Left colon (tissue), 2 donors: ENCODE measurements at regions of chr1 and their contacts with region 1.

Region 1: DNA sequence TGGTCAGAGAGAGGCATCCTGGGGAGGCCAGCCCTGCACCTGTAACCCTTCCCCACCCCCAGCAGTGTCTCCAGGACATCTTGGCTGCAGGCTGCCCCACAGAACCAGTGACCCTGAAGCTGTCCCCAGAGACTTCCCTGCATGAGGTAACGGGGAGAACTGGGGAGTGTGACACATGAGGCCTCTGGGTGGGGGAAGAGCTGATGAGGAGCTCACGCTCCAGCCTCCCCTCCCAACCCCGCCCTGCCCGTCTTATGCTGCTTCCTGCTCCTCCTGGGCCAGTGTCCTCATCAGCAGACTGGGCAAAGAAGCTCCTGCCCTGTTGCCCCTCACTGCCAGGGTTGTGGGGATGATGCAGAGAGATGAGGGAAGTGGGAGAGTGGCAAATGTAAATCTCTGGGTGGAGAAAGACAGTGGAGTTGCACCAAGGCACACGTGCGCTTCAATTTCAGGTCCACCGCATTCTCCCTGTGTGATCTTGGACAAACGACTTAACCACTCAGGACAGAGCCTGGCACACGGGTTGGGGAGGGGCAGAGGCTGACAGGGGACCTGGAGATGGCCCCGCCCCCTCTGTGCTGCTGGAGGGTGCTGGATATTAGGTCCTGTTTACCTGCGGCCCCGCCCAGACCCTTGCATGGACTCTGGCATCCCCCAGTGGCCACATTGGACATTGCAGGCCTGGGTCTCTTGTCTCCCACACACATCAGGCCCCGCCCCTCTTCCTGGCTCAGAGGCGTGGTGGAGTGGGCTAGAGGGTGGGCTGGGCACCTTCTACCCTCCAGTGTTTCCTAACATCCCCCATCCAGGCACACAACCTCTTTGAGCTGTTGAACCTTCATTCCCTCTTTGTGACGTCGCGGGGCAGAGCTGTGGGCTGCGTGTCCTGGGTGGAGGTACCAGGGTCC is 12.3 kb downstream of the CLCNKB start:
- DNase-seq: peak; percentile 82 to 92
- ATAC-seq: peak; percentile 93

Region 2: DNA sequence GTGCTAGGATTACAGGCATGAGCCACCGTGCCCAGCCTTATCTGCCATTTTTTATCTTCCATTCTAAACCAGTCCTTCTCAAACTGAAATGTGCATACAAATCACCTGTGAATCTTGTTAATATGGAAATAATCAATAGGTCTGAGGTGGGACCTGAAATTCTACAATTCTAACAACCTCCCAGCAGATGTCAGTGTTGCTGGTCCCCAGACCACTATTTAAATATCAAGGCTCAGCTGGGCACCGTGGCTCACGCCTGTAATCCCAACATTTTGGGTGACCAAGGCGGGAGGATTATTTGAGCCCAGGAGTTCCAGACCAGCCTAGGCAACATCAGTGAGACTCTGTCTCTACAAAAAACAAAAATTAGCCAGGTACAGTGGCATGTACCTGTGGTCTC is 252.5 kb before region 1 on chr1:
- intact Hi-C with region 1: loop called in 1 of 2 experiments (anchors 10 kb)
- DNase-seq: no peak
- ATAC-seq: no peak

Region 3: DNA sequence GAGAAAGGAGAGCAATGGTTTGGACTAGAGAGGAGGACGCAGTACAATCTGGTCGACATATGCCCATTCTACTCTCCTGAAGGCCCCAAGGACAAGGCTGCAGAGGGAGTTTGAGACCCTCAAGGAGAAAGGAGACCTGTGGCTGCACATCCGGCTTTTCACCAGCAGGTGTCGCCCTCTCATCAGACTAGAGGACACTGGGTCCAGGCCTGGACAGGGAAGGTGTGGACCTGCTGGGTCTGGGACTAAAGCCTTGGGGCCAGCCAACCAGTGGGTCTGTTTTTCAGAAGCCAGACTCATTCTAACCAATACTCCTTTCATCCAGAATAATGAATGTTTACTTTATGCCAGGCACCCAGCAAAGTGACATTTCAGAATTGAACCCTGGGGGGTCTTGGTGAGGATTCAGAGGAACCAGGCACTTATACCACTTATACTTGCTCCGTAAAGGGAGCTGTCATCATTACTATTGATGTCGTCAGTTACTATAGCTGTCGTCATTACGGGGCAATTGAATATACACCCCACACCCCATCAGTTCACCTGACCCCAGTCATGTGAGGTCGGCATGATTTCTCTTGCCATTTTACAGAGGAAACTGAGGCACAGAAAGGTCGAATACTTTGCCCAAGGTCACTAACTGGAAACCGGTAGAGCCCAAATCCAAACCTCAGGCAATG is 46.7 kb before region 1 on chr1:
- intact Hi-C with region 1: loop called in 1 of 2 experiments (anchors 5 kb)
- DNase-seq: peak; percentile 64 to 81
- ATAC-seq: peak; percentile 50

Region 4: GRCh38 chr1:16348426-16349182 is 292.7 kb after region 1 on chr1:
- intact Hi-C with region 1: no loop called
- DNase-seq: no peak
- ATAC-seq: no peak